OCI-LY7 (cell line): ENCODE measurements at regions of chr1 and their contacts with region 1.

Region 1: GRCh38 chr1:2300851-2301606 is 72.9 kb downstream of the SKI start:
- DNase-seq: peak; percentile 90
- H3K4me3 ChIP-seq: peak overlapping the region; percentile 63
- H3K27ac ChIP-seq: peak overlapping the region; percentile 84
- H3K4me1 ChIP-seq: peaks cover 26% of the 10 kb centered on the region
- CTCF ChIP-seq: no peak

Region 2: GRCh38 chr1:2194898-2195673 is 105.9 kb before region 1 on chr1:
- CTCF ChIA-PET with region 1: interaction called, 3 read pairs
- POLR2A ChIA-PET with region 1: no interaction called
- intact Hi-C with region 1: loop called (anchors 5 kb)
- DNase-seq: peak; percentile 87
- H3K4me3 ChIP-seq: peak overlapping the region; percentile 67
- H3K27ac ChIP-seq: peak overlapping the region; percentile 52
- H3K4me1 ChIP-seq: peaks cover 23% of the 10 kb centered on the region
- CTCF ChIP-seq: peak; percentile 91

Region 3: DNA sequence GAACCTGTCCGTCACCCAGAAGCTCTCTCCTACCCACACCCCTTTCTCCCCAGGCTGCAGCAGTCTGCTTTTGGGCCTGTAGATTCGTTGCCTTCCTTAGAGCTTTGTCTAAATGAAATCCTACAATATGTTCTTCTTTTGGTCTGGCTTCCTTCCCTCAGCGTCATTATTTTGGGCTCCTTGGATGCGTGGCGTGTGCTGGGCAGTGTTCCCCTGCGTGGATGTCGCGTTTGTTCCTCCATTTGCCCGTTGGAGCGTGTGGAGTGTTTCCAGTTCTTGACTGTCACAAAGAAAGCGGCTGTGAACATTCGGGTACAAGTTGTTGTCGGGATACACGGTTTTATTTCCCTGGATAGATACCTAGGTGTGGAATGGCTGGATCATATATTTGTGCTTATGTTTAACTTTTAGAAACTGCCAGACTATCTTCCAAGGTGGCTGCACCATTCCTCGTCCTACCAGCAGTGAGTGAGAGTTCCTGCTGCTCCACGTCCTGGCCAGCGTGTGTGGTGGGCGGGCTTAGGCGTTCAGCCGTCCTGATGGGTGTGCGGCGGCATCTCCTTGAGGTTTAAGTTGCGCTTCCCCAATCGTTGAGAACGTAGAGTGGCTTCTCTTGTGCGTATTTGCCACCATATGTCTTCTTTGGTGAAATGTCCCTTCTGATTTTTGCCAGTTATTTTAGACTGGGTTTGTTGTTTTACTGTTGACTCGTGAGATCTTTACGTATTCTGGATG is 41.2 kb before region 1 on chr1:
- CTCF ChIA-PET with region 1: no interaction called
- POLR2A ChIA-PET with region 1: interaction called, 4 read pairs
- intact Hi-C with region 1: loop called (anchors 2 kb)
- DNase-seq: no peak
- H3K4me3 ChIP-seq: no peak overlapping the region
- H3K27ac ChIP-seq: peak overlapping the region; percentile 51
- H3K4me1 ChIP-seq: peaks cover 47% of the 10 kb centered on the region
- CTCF ChIP-seq: no peak

Region 4: GRCh38 chr1:2270260-2271100 is 30.5 kb before region 1 on chr1:
- CTCF ChIA-PET with region 1: no interaction called
- POLR2A ChIA-PET with region 1: no interaction called
- intact Hi-C with region 1: no loop called
- DNase-seq: no peak
- H3K4me3 ChIP-seq: no peak overlapping the region
- H3K27ac ChIP-seq: no peak overlapping the region
- H3K4me1 ChIP-seq: no peaks in the 10 kb centered on the region
- CTCF ChIP-seq: no peak